ENCODE measurements at regions of chr17 and their contacts with region 1.

Region 1: DNA sequence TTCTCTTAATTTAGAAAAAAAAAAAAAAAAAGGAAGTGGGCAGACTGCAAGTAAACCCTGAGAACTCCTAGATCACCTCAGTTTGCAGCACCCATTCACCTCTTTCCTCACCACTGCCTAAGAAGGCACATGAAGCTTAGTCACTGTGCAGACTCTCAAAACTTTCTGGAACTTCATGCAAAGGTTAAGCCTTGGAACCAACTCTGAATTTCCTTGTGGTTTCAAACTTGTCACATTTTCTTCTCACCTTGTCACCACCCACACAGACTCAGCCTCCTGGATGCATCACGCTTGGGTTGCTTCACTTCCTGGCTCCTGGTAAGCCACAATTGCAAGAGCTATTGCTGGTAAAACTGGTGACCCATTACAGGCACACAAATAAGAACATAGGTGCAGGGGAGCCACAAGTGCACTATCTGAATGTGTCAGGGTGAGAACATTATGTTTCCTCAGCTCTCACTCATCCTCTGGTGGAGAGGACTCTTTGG is 15.0 kb upstream of the CPD start:
- DNase-seq: peak; percentile 95
- ATAC-seq: peak; percentile 83
- H3K4me3 ChIP-seq: no peak overlapping the region
- H3K27ac ChIP-seq: no peak overlapping the region
- H3K4me1 ChIP-seq: no peaks in the 10 kb centered on the region; the same call in 1 of the 2 replicates
- H3K27me3 ChIP-seq: no peaks in the 10 kb centered on the region
- CTCF ChIP-seq: no peak
- POLR2A ChIP-seq: no peak
- RAD21 ChIP-seq: no peak

Region 2: DNA sequence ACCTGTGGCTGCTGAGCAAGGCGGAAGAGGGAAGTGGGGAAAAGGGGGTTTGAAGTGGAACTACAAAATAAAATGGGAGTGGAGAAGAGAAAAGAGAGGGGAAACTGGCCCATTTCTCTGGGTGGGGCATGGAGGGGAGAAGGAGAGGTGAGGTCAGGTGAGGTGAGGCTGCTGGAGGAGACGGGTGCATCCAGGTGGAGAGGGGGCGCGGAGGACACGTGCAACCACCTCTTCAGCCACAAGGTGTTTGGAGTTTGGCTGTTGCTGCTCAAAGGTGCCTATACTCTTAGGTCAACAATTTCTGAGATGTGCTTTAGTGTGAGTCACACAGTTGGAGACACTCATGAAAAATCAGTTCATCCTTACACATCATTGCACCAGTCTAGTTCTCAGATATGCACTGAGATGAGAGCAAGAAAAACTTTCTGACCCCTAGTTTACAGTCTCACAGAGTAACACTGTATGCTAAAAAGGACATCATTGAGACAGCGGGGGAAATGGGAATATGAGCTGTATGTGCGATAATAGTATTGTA is 133.1 kb before region 1 on chr17:
- CTCF ChIA-PET with region 1: no interaction called
- POLR2A ChIA-PET with region 1: no interaction called
- dilution Hi-C with region 1: no loop called
- in situ Hi-C with region 1: no loop called
- intact Hi-C with region 1: no loop called
- DNase-seq: peak; percentile 27
- ATAC-seq: no peak
- H3K4me3 ChIP-seq: no peak overlapping the region
- H3K27ac ChIP-seq: no peak overlapping the region
- H3K4me1 ChIP-seq: peaks cover 2% of the 10 kb centered on the region; the same call in 1 of the 2 replicates
- H3K27me3 ChIP-seq: peaks cover 65% of the 10 kb centered on the region
- CTCF ChIP-seq: no peak
- POLR2A ChIP-seq: no peak
- RAD21 ChIP-seq: no peak

Region 3: GRCh38 chr17:30393911-30394867 is 30.4 kb after region 1 on chr17:
- CTCF ChIA-PET with region 1: no interaction called
- POLR2A ChIA-PET with region 1: interaction called, 11 read pairs
- dilution Hi-C with region 1: no loop called
- in situ Hi-C with region 1: no loop called
- intact Hi-C with region 1: no loop called
- DNase-seq: no peak
- ATAC-seq: no peak
- H3K4me3 ChIP-seq: no peak overlapping the region
- H3K27ac ChIP-seq: no peak overlapping the region
- H3K4me1 ChIP-seq: peaks cover 1% of the 10 kb centered on the region; the same call in 1 of the 2 replicates
- H3K27me3 ChIP-seq: no peaks in the 10 kb centered on the region
- CTCF ChIP-seq: no peak
- POLR2A ChIP-seq: no peak
- RAD21 ChIP-seq: no peak

Region 4: DNA sequence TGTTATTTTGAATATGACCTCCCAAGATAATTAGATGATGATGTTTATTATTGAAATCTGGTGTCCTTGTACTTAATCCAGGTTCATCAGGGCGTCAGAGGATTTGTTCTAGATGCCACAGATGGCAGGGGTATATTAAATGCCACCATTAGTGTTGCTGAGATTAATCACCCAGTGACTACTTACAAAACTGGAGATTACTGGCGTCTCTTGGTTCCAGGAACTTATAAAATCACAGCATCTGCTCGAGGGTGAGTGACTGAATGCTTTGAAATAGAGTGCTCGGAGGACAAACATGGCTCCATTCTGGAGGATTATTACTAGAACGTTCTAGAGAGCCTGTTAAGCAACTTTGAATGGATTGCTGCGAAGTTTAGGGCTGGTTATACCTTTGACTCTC is 80.0 kb after region 1 on chr17:
- CTCF ChIA-PET with region 1: no interaction called
- POLR2A ChIA-PET with region 1: no interaction called
- dilution Hi-C with region 1: no loop called
- in situ Hi-C with region 1: no loop called
- intact Hi-C with region 1: no loop called
- DNase-seq: no peak
- ATAC-seq: no peak
- H3K4me3 ChIP-seq: no peak overlapping the region
- H3K27ac ChIP-seq: no peak overlapping the region
- H3K4me1 ChIP-seq: no peaks in the 10 kb centered on the region; the same call in 1 of the 2 replicates
- H3K27me3 ChIP-seq: no peaks in the 10 kb centered on the region
- CTCF ChIP-seq: no peak
- POLR2A ChIP-seq: no peak
- RAD21 ChIP-seq: no peak